Natural killer cell (primary cell): ENCODE measurements at regions of chr6 and their contacts with region 1.

Region 1: GRCh38 chr6:31493875-31494694 is 3.9 kb upstream of the MICB start:
- DNase-seq: peak; percentile 81 to 91
- ATAC-seq: peak; percentile 60 to 78 (median 60)
- H3K4me3 ChIP-seq: peak overlapping the region; percentile 88
- H3K4me3 Mint-ChIP-seq: peak overlapping the region; percentile 96
- H3K27ac ChIP-seq: peak overlapping the region; percentile 75
- H3K27ac Mint-ChIP-seq: peak overlapping the region; percentile 80 to 89
- H3K4me1 ChIP-seq: peaks cover 39% of the 10 kb centered on the region
- H3K4me1 Mint-ChIP-seq: peaks cover 51 to 62% of the 10 kb centered on the region in 2 donors
- H3K27me3 ChIP-seq: no peaks in the 10 kb centered on the region
- H3K27me3 Mint-ChIP-seq: no peaks in the 10 kb centered on the region
- CTCF ChIP-seq: peak; percentile 90

Region 2: DNA sequence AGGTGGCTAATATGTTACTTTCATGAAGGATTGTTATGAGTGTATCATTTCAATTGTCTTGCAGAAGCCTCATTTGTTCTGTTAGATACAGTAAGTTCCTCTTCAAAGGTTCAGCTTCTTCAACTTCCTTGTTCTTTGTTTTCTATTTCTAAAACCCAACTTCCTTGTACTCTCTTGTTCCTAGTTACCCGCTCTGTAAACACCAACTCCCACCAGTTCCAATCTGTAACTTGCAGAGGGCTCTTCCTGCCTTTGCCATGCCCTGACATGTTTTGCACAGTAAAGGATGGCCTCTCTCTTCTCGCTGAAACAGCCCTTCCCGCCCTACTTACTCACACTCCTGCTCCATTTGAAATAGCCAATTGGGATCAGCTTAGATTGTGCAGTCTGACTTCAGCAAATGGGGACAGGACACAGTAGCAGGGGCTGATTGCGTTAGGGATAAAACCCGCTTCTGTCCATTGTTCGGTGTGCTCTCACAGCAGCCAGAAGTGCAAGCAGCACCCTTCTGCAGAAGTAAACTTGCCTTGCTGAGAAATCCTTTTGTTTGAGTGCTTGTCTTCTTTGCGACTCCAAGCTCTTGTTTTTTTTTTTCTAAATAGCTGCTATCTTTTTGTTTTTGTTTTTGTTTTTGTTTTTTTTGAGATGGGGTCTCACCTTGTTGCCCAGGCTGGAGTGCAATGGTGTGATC is 277.7 kb before region 1 on chr6:
- intact Hi-C with region 1: no loop called
- DNase-seq: no peak
- ATAC-seq: peak in 2 of 3 donors; percentile 18 to 56
- H3K4me3 ChIP-seq: no peak overlapping the region
- H3K4me3 Mint-ChIP-seq: no peak overlapping the region
- H3K27ac ChIP-seq: peak overlapping the region; percentile 25
- H3K27ac Mint-ChIP-seq: no peak overlapping the region
- H3K4me1 ChIP-seq: no peaks in the 10 kb centered on the region
- H3K4me1 Mint-ChIP-seq: peaks cover 0 to 5% of the 10 kb centered on the region in 2 donors
- H3K27me3 ChIP-seq: no peaks in the 10 kb centered on the region
- H3K27me3 Mint-ChIP-seq: peaks cover 3 to 6% of the 10 kb centered on the region in 2 donors
- CTCF ChIP-seq: no peak

Region 3: DNA sequence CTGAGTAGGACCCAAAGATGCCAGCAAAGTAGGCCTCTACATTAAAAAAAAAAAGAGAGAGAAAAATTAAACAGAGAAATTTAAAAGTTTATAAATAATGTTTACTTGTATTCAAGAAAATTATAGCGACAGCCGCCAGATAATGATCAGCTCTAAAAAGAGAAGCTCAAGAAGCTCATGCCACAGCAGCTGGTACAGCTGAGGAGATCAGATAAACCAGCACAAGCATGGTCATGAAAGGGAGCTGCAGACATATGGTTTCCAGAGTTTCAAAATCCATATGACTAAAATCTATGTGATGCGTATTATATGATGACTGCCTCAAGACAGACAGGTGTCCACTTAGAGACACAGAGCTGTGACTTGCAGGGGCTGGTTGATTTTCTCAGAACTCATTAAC is 208.6 kb before region 1 on chr6:
- intact Hi-C with region 1: no loop called
- DNase-seq: no peak
- ATAC-seq: no peak
- H3K4me3 ChIP-seq: no peak overlapping the region
- H3K4me3 Mint-ChIP-seq: no peak overlapping the region
- H3K27ac ChIP-seq: no peak overlapping the region
- H3K27ac Mint-ChIP-seq: no peak overlapping the region
- H3K4me1 ChIP-seq: no peaks in the 10 kb centered on the region
- H3K4me1 Mint-ChIP-seq: peaks cover 5 to 10% of the 10 kb centered on the region in 2 donors
- H3K27me3 ChIP-seq: no peaks in the 10 kb centered on the region
- H3K27me3 Mint-ChIP-seq: peaks cover 6 to 13% of the 10 kb centered on the region in 2 donors
- CTCF ChIP-seq: no peak

Region 4: DNA sequence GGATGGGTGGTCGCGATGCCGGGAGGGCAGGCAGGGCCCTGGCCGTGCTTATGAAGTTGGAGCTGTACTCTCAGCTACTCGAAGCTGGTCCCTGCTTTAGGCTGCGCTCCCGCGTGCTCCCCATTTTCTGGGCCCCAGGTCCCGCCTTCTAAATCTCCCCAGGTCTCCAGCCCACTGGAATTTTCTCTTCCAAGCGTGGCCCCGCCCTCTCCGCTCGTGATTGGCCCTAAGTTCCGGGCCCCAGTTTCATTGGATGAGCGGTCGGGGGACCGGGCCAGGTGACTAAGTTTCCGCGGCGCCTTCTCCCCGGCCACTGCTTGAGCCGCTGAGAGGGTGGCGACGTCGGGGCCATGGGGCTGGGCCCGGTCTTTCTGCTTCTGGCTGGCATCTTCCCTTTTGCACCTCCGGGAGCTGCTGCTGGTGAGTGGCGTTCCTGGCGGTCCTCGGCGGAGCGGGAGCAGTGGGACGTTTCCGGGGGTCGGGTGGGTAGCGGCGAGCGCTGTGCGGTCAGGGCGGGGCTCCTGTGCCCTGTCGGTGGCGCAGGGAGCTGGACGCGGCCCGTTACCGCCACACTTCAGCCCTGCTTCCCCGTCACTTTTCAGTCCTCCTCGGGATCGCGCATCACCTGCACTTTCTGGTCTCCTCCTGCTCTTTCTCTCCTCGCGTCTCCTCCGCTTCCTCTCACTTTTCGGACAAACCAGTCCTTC is 90.6 kb before region 1 on chr6 and contains the start of gene MICA:
- intact Hi-C with region 1: loop called (anchors 5 kb)
- DNase-seq: peak; percentile 77 to 82
- ATAC-seq: peak; percentile 71 to 78 (median 77)
- H3K4me3 ChIP-seq: peak within 1 kb of the TSS; percentile 61
- H3K4me3 Mint-ChIP-seq: peak within 1 kb of the TSS; percentile 93
- H3K27ac ChIP-seq: peak within 1 kb of the TSS; percentile 55
- H3K27ac Mint-ChIP-seq: peak within 1 kb of the TSS; percentile 85 to 96
- H3K4me1 ChIP-seq: peaks cover 46% of the 10 kb centered on the region
- H3K4me1 Mint-ChIP-seq: peaks cover 82 to 84% of the 10 kb centered on the region in 2 donors
- H3K27me3 ChIP-seq: no peaks in the 10 kb centered on the region
- H3K27me3 Mint-ChIP-seq: no peaks in the 10 kb centered on the region
- CTCF ChIP-seq: no peak
- total RNA-seq, gene MICA: 9.3 to 19.7 (median 11.4) TPM

Region 5: DNA sequence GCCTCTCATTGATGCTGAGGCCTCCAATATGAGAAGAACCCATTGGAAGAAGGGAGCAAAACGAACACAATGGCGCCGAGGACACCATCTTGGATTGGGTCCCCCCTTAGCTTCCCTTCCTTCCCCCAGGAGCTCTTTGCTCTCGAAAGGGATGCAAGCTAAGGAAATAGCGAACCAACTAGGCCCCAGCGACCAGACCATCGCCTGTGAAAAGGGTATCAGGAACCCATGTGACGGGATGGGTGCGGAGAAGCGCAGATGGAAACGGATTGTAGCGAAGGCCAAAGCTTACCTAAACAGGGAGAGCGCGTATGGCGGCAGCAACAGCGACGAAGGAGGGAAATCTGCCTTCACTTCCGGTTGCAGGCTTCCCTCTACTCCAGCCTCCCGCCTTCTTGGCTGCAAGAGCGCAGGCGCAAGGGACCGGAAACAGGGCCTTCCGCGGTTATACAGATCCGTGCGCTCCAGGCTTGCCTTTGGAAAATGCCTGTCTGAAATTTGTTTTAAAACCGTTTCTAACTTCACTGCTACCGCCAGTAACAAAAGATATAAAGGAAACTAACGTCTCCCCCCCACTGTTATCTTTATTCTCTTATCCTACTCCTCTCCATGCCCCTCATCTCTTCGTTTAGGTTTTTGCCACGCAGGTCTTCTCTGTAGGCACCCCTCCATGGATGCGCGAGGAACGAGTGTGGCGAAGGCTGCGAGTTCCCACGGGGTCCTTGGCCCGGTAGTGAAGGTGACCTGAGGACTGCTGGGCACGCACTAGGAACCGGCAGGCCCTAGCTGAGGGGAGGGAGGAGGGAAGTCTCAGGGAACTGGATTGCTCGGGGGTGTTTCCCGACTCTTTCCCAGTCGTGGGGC is 47.8 kb after region 1 on chr6 and contains the start of gene DDX39B:
- intact Hi-C with region 1: loop called (anchors 2 kb)
- DNase-seq: peak; percentile 85 to 99
- ATAC-seq: peak; percentile 69 to 86 (median 77)
- H3K4me3 ChIP-seq: peak within 1 kb of the TSS; percentile 77
- H3K4me3 Mint-ChIP-seq: peak within 1 kb of the TSS; percentile 99
- H3K27ac ChIP-seq: peak within 1 kb of the TSS; percentile 92
- H3K27ac Mint-ChIP-seq: peak within 1 kb of the TSS; percentile 94 to 96
- H3K4me1 ChIP-seq: peaks cover 36% of the 10 kb centered on the region
- H3K4me1 Mint-ChIP-seq: peaks cover 49 to 56% of the 10 kb centered on the region in 2 donors
- H3K27me3 ChIP-seq: no peaks in the 10 kb centered on the region
- H3K27me3 Mint-ChIP-seq: no peaks in the 10 kb centered on the region
- CTCF ChIP-seq: no peak
- total RNA-seq, gene DDX39B: 506 to 571 (median 534) TPM

Region 6: DNA sequence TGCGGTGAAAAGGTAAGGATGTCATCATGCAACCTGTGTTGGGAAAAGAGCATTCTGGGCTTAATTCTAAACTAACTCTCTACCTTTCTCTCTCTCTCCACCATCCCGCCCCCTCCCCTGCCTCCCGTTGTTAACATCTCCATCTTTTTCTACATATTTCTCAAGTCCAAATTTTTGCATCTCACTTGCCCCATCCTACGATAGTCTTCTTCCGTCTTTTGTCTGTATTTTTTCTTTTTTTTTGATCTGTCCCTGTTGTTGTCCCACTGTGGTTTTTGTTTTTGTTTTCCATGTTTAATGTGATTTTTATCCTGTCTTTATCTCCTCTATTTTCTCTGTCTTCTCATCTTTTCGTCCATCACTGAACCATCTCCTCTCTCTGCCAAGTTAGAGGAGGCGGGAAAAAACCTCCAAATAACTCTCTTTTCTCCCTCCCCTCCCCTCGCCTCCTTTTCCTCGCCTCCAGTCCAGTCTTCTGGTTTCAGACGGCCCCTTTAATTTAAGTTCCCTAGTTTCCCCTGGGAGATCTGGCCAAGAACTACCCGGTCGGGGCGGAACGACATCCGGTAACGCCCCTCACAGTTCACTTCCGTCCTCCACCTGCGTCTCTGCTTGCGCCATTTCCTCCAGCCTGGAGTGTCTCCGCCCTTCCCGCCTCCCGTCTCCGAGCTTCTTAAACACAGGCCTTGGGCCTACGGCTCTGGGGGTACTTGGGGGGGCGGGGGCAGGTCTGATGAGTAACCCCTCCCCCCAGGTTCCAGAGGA is 53.1 kb after region 1 on chr6 and contains the start of gene NFKBIL1:
- intact Hi-C with region 1: loop called (anchors 2 kb)
- DNase-seq: peak; percentile 76 to 96
- ATAC-seq: peak; percentile 89 to 96 (median 91)
- H3K4me3 ChIP-seq: peak within 1 kb of the TSS; percentile 38
- H3K4me3 Mint-ChIP-seq: peak within 1 kb of the TSS; percentile 95
- H3K27ac ChIP-seq: peak within 1 kb of the TSS; percentile 87
- H3K27ac Mint-ChIP-seq: peak within 1 kb of the TSS; percentile 90 to 97
- H3K4me1 ChIP-seq: peaks cover 40% of the 10 kb centered on the region
- H3K4me1 Mint-ChIP-seq: peaks cover 32 to 41% of the 10 kb centered on the region in 2 donors
- H3K27me3 ChIP-seq: no peaks in the 10 kb centered on the region
- H3K27me3 Mint-ChIP-seq: no peaks in the 10 kb centered on the region
- CTCF ChIP-seq: peak; percentile 31
- total RNA-seq, gene NFKBIL1: 8.1 to 10.9 (median 10.7) TPM

Region 7: DNA sequence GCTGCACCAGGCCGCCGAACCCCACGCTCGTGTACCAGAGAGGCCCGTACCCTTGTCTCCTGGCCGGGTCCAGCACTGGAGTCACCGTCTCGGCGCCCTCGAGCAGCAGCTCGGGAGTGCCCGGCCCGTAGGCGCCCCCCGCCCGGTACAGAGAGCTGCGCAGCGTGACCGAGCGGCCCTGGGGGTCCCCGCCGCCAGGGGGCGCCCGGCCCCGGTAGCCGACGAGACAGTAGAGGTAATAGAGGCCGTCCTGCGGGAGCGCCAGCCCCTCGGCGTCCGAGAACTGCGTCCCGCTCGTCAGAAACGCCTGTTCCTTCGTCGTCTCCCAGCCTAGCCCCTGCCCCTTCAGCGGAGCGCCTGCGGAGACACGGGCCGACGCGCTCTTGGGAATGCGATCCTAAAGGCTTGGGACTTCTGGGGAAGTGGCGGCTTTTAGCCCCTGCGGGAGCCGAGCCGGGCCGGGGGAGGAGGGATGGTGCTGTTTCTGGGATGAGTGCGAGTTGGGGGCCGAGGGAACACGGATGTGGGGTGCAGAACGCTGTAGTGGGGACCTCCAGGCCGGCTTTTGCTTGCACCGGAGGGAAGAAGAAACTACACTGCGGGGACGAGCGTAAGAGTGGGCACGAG is 86.8 kb after region 1 on chr6:
- intact Hi-C with region 1: loop called (anchors 5 kb)
- DNase-seq: peak; percentile 92 to 93
- ATAC-seq: peak; percentile 85 to 96 (median 87)
- H3K4me3 ChIP-seq: peak overlapping the region; percentile 98
- H3K4me3 Mint-ChIP-seq: peak overlapping the region; percentile 98
- H3K27ac ChIP-seq: peak overlapping the region; percentile 87
- H3K27ac Mint-ChIP-seq: peak overlapping the region; percentile 95 to 100
- H3K4me1 ChIP-seq: peaks cover 89% of the 10 kb centered on the region
- H3K4me1 Mint-ChIP-seq: peaks cover 74 to 75% of the 10 kb centered on the region in 2 donors
- H3K27me3 ChIP-seq: no peaks in the 10 kb centered on the region
- H3K27me3 Mint-ChIP-seq: no peaks in the 10 kb centered on the region
- CTCF ChIP-seq: peak; percentile 99

Region 8: GRCh38 chr6:31597006-31597405 is 102.9 kb after region 1 on chr6:
- intact Hi-C with region 1: loop called (anchors 1 kb)
- DNase-seq: peak in 1 of 2 donors; percentile 86
- ATAC-seq: peak; percentile 57 to 73 (median 58)
- H3K4me3 ChIP-seq: no peak overlapping the region
- H3K4me3 Mint-ChIP-seq: peak overlapping the region; percentile 60
- H3K27ac ChIP-seq: no peak overlapping the region
- H3K27ac Mint-ChIP-seq: peak overlapping the region; percentile 58 to 82
- H3K4me1 ChIP-seq: peaks cover 54% of the 10 kb centered on the region
- H3K4me1 Mint-ChIP-seq: peaks cover 23 to 44% of the 10 kb centered on the region in 2 donors
- H3K27me3 ChIP-seq: no peaks in the 10 kb centered on the region
- H3K27me3 Mint-ChIP-seq: no peaks in the 10 kb centered on the region
- CTCF ChIP-seq: peak; percentile 75